Prostate gland (tissue), 2 donors: ENCODE measurements at regions of chr6 and their contacts with region 1.

Region 1: DNA sequence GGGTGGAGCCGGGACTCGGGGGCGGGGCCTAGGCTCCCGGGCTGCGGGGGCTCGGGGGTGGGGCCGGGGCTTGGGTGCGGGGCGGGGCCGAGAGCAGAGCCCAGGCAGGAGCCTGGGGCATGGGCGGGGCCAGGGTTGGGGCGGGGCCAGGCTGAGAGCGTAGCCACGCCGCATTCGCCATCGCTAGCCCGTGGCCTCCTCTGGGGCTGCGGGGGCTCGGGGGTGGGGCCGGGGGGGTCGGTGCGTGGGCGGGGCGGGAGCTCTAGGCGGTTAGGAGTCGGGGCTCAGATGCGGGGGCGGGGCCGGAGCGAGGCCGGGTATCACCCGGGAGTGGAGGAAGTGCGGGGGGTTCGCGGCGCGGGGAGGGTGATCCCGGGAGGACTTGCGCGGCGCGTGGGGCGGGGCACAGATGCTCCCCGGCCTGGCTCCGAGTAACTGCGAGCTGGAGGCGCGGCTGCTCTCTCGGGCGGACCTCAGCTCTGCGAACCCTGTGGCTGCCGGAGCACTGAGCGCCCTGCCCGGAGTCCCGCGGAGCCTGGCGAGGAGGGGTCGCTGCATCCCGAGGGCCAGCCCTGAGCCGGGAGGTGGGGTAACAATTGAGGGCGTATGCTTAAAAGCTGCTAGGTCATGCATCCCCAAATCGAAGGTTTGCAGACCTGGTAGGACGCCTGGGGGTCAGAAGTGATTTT is 434 bp upstream of the ECI2 start:
- DNase-seq: peak; percentile 95
- H3K4me3 ChIP-seq: peak overlapping the region; percentile 61 to 83
- H3K27ac ChIP-seq: peak overlapping the region; percentile 75 to 86
- H3K4me1 ChIP-seq: no peaks in the 10 kb centered on the region
- H3K27me3 ChIP-seq: no peaks in the 10 kb centered on the region
- CTCF ChIP-seq: peak in 1 of 4 experiments; percentile 20
- POLR2A ChIP-seq: peak; percentile 74

Region 2: GRCh38 chr6:3742426-3743344 is 393.1 kb before region 1 on chr6:
- intact Hi-C with region 1: loop called (anchors 10 kb)
- DNase-seq: peak; percentile 86
- H3K4me3 ChIP-seq: no peak overlapping the region
- H3K27ac ChIP-seq: peak overlapping the region; percentile 65 to 71
- H3K4me1 ChIP-seq: peaks cover 23% of the 10 kb centered on the region
- H3K27me3 ChIP-seq: no peaks in the 10 kb centered on the region
- CTCF ChIP-seq: peak; percentile 93 to 99 (median 96)
- POLR2A ChIP-seq: no peak

Region 3: DNA sequence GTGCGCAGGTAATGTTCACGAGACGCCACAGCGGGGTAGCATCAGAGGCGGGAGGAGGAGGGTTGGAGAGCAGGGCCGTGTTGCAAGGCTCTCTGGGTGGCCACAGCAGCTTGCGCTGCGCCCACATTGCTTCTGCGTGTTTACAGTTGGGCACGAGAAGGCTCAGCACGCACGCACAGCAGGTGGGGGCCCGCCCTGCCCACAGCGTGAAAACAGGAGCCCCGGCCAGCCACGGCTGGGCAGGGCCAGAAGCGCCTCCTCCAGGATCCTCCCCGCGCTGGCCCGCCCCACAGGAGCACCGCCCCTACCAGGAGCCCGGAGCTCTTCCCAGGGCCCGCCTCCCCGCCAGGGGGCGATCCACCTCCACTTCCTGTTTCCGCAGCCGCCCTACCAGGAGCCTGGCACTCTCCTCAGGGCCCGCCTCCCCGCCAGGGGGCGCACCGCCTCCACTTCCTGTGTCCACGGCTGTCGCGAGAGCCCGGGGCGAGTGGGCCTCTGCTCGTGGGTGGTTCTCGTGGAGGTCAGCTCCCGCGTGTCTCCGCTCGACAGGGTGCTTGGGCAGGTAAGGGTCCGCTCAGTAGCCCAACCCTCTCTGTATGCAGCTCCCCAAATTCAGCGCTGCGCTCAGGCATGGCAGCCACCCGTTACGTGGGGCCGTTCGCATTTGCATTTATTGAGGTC is 286.7 kb before region 1 on chr6 and contains the start of gene FAM50B:
- intact Hi-C with region 1: no loop called
- DNase-seq: peak; percentile 90
- H3K4me3 ChIP-seq: peak within 1 kb of the TSS; percentile 31 to 38
- H3K27ac ChIP-seq: peak within 1 kb of the TSS; percentile 47 to 64
- H3K4me1 ChIP-seq: no peaks in the 10 kb centered on the region
- H3K27me3 ChIP-seq: no peaks in the 10 kb centered on the region
- CTCF ChIP-seq: peak; percentile 93 to 98 (median 96)
- POLR2A ChIP-seq: peak; percentile 48
- total RNA-seq, gene FAM50B: 14.2 to 36.4 TPM

Region 4: GRCh38 chr6:4021133-4021853 is 114.5 kb before region 1 on chr6:
- intact Hi-C with region 1: loop called (anchors 5 kb)
- DNase-seq: peak; percentile 95
- H3K4me3 ChIP-seq: peak overlapping the region; percentile 75 to 88
- H3K27ac ChIP-seq: peak overlapping the region; percentile 97 to 99
- H3K4me1 ChIP-seq: peaks cover 3% of the 10 kb centered on the region
- H3K27me3 ChIP-seq: no peaks in the 10 kb centered on the region
- CTCF ChIP-seq: peak in 2 of 4 experiments; percentile 29 to 30
- POLR2A ChIP-seq: peak; percentile 80

Region 5: DNA sequence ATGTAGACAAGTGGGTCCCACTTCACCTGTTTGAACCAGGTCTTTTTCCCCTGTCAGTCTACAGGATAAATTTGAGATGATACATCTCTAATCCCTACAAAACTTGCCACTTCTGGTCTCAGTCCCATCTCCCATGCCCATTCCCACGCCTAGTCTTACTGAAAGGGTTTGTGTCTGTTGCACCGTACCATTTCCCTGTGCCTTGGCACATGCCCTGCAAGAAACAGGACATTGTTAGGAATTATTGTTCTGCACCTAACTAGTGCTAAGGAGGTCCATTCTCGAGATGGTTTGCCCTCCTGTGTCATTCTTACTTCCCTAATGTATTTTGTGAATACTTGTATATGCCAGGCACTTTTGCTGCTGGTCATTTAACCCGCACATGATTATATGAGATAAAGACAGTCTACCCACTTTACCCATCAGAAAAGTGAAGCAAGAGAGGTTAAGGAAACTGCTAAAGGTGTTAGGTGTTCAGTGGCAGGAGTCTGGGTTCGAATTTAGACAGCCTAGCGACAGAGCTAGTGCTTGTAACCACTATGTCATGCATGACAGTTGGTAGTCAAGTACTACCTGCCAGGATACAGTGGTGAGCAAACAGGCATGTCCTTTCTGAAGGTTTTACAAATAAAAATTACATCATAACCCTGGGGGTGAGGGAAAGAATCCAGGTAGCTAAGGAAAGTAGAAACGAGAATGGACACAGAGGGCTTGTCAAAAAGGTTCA is 69.6 kb before region 1 on chr6:
- intact Hi-C with region 1: no loop called
- DNase-seq: no peak
- H3K4me3 ChIP-seq: no peak overlapping the region
- H3K27ac ChIP-seq: no peak overlapping the region
- H3K4me1 ChIP-seq: no peaks in the 10 kb centered on the region
- H3K27me3 ChIP-seq: no peaks in the 10 kb centered on the region
- CTCF ChIP-seq: no peak
- POLR2A ChIP-seq: no peak